ENCODE measurements at regions of chr6 and their contacts with region 1.

Region 1: DNA sequence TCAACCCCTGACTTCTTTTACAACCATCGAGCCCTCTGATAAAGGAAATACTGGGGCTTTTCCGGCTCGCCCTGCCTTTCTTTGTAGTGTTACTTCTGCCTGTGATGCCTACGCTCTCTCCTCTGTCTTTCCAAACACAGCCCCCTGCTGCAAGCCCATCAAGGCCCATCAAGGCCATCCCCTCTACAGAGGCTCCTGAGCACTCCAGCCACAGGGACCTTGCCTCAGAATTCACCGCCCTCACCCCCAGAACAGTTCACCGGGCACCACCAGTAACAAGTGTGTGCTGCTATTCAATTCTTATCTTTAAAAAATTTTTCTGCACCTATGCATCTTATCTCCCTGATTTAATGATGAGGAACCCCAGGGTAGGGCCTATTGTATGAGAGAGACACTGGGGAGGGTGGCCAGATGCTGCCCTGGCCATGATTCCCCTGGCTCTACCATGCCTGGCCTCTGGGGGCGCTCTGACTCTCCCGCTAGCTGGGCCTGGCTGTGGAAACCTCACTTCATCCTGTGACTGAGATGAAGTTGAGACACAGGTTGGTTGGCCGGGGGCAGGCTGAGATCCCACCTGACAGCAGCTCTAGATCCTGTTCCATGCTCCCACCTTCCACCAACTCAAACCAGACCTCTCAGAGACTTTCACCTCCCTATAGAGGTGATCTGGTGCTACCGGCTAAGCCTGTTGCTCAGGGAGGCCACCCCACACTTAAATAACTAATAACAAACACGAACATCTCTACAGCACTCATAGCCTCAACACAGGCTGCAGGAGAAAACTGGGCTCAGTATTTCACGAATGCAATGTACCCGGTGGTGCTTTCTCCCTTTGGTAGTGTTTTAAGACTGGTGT is 19.2 kb upstream of the GLP1R start:
- DNase-seq: peak; percentile 68
- H3K4me3 Mint-ChIP-seq: no peak overlapping the region
- H3K27ac Mint-ChIP-seq: no peak overlapping the region
- H3K4me1 Mint-ChIP-seq: no peaks in the 10 kb centered on the region
- H3K27me3 Mint-ChIP-seq: peaks cover 29% of the 10 kb centered on the region

Region 2: GRCh38 chr6:38852215-38852614 is 177.2 kb before region 1 on chr6:
- CTCF ChIA-PET with region 1: no interaction called
- POLR2A ChIA-PET with region 1: no interaction called
- intact Hi-C with region 1: no loop called
- DNase-seq: no peak
- H3K4me3 Mint-ChIP-seq: no peak overlapping the region
- H3K27ac Mint-ChIP-seq: no peak overlapping the region
- H3K4me1 Mint-ChIP-seq: no peaks in the 10 kb centered on the region
- H3K27me3 Mint-ChIP-seq: peaks cover 19% of the 10 kb centered on the region

Region 3: DNA sequence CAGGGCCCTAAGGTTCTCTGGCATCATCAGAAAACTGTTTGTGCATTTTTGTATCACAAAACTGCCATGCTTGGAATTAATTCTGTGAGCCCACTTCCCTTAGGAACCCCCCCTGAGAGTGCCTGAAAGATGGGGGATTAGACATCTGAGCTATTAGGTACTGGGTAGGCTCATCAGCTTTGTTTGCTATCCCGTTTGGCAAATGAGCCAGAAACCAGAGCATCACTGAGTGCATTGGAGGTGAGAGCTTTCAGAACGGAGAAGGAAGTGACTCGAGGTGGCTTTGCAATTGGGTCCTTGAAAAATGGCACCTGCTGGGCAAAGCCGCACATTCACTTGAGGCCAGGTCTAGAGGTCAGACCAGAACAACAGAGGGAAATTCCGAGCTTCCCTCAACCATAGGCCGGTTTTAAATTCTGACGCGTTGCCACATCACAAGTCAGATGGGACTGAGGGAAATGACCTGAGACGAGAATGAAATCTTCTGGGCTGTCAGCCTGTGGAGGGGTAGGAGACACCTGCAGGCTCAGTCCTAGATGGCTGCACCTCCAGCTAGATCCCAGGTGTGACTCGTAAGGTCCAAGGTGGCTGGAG is 10.8 kb after region 1 on chr6:
- CTCF ChIA-PET with region 1: interaction called, 10 read pairs
- POLR2A ChIA-PET with region 1: no interaction called
- intact Hi-C with region 1: no loop called
- DNase-seq: no peak
- H3K4me3 Mint-ChIP-seq: no peak overlapping the region
- H3K27ac Mint-ChIP-seq: no peak overlapping the region
- H3K4me1 Mint-ChIP-seq: peaks cover 4% of the 10 kb centered on the region
- H3K27me3 Mint-ChIP-seq: peaks cover 41% of the 10 kb centered on the region

Region 4: GRCh38 chr6:39102071-39102820 is 72.9 kb after region 1 on chr6:
- CTCF ChIA-PET with region 1: no interaction called
- POLR2A ChIA-PET with region 1: interaction called, 3 read pairs
- intact Hi-C with region 1: loop called (anchors 5 kb)
- DNase-seq: peak; percentile 31
- H3K4me3 Mint-ChIP-seq: no peak overlapping the region
- H3K27ac Mint-ChIP-seq: no peak overlapping the region
- H3K4me1 Mint-ChIP-seq: peaks cover 11% of the 10 kb centered on the region
- H3K27me3 Mint-ChIP-seq: no peaks in the 10 kb centered on the region

Measured in activated CD4-positive, alpha-beta memory T cell treated with anti-CD3 and anti-CD28 coated beads for 36 hours (primary cell).